ENCODE measurements at regions of chr5 and their contacts with region 1.

Region 1: DNA sequence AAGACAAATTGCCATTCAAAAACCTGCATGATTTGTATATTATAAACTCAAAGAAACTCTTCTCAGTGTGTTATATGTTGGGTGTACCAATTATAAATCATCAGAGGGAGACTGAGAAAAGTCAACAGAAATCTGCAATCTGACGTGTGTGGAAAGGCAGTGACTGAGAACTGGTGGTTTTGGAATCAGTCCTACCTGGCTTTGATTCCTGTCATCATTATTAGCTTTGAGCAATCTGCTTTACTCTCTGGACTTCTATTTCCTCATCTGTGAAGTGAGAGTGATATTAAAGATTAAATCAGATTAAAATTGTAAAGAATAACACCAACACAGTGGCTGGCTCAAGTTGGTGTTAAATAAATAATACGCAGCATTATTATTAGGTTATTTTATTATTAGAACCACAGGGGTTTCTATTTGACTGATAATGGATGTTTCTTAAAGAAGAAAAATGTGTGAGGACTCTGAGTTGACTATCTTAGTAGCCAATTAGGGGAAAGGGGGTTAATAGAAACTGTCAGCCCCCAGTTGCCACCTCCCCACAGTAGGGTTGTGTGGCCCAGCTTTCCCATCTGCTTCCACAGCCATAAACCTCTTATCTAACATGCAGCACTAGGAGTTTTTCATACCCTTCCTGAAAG is 59.6 kb downstream of the SNCAIP start:
- DNase-seq: no peak
- H3K4me3 ChIP-seq: no peak overlapping the region
- H3K27me3 ChIP-seq: no peaks in the 10 kb centered on the region
- CTCF ChIP-seq: no peak

Region 2: DNA sequence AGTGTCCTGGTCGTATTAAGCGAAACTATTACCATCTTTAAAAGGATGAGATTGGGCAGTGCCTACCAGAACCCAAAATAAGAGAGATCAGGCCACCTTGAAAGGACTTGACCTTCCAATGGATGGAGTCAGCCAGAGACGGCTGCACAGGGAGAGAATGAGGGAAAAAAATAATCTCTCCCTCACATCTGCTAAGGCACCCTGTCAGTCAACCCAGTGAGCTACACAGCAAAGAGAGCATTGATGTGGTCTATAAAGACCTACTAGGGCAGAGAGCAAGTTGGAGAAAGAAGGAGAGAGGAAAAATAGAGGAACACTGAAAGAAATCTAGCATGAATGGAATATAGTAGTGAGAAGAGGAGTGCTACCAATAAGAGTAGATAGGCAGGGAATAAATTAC is 587.9 kb before region 1 on chr5:
- CTCF ChIA-PET with region 1: no interaction called
- POLR2A ChIA-PET with region 1: no interaction called
- DNase-seq: no peak
- H3K4me3 ChIP-seq: no peak overlapping the region
- H3K27me3 ChIP-seq: no peaks in the 10 kb centered on the region
- CTCF ChIP-seq: no peak

Region 3: GRCh38 chr5:124315741-124316415 is 1944.2 kb after region 1 on chr5:
- CTCF ChIA-PET with region 1: no interaction called
- POLR2A ChIA-PET with region 1: interaction called, 14 read pairs
- DNase-seq: no peak
- H3K4me3 ChIP-seq: no peak overlapping the region
- H3K27me3 ChIP-seq: no peaks in the 10 kb centered on the region
- CTCF ChIP-seq: no peak